ENCODE measurements at regions of chr7 and their contacts with region 1.

Region 1: GRCh38 chr7:135211179-135211945 is at the start of gene WDR91:
- DNase-seq: peak; percentile 92 to 98 (median 97)
- ATAC-seq: peak; percentile 91
- H3K4me3 ChIP-seq: peak within 1 kb of the TSS; percentile 95
- H3K4me3 Mint-ChIP-seq: peak within 1 kb of the TSS; percentile 95
- H3K27ac ChIP-seq: peak within 1 kb of the TSS; percentile 77
- H3K27ac Mint-ChIP-seq: peak within 1 kb of the TSS; percentile 92
- H3K4me1 ChIP-seq: peaks cover 37% of the 10 kb centered on the region
- H3K4me1 Mint-ChIP-seq: peaks cover 42% of the 10 kb centered on the region
- H3K27me3 ChIP-seq: no peaks in the 10 kb centered on the region
- H3K27me3 Mint-ChIP-seq: no peaks in the 10 kb centered on the region
- CTCF ChIP-seq: no peak
- total RNA-seq, gene WDR91: 39.9 to 41.7 TPM

Region 2: GRCh38 chr7:134316539-134317344 is 894.6 kb before region 1 on chr7 and contains the start of gene SLC35B4:
- CTCF ChIA-PET with region 1: no interaction called
- POLR2A ChIA-PET with region 1: no interaction called
- intact Hi-C with region 1: loop called in 1 of 2 experiments (anchors 5 kb)
- DNase-seq: peak; percentile 90 to 97 (median 92)
- ATAC-seq: peak; percentile 96
- H3K4me3 ChIP-seq: peak within 1 kb of the TSS; percentile 98
- H3K4me3 Mint-ChIP-seq: peak within 1 kb of the TSS; percentile 93
- H3K27ac ChIP-seq: peak within 1 kb of the TSS; percentile 36 to 65
- H3K27ac Mint-ChIP-seq: peak within 1 kb of the TSS; percentile 77
- H3K4me1 ChIP-seq: peaks cover 15% of the 10 kb centered on the region
- H3K4me1 Mint-ChIP-seq: peaks cover 26% of the 10 kb centered on the region
- H3K27me3 ChIP-seq: no peaks in the 10 kb centered on the region
- H3K27me3 Mint-ChIP-seq: no peaks in the 10 kb centered on the region
- CTCF ChIP-seq: peak; percentile 27
- total RNA-seq, gene SLC35B4: 5.8 to 7.8 TPM

Region 3: DNA sequence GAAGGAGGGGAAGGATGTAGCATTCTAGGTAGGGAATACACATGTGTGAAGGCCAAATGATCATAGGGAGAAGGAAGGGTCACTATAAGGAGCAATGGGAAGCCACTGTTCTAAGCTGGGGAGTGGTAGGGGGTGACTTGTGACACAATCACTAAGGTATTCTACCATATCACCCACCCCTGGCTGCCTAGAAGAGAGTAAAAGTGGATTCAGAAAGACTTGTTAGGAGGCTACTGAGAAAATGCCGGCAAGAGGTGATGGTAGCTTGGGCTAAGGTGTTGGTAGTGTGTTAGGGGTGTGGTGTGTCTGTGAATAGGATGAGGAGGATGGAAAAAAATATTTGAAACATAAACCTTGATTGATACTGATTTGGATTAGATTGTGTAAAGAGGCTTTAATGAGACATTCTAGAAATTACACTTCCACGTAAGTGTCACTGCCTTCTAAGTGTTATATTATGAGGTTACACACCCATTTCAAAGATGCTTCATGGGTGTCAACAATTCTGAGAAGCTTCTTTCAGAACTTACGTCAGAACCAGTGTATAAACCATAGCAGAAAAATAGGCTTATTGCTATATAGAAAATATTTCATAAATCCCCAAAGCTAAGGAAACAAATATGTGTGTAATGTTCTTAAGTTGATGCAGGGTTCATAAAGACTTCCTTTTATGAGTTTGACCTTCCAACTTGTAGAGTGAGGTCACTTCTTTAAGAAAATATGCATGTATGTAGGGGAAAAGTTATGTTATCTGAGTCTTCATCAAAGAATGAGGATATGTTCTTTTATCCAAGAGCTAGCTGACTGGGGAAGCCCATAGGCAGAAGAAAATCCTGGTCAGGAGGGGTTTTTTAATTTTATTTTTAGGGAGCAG is 570.3 kb before region 1 on chr7:
- CTCF ChIA-PET with region 1: no interaction called
- POLR2A ChIA-PET with region 1: interaction called, 6 read pairs
- intact Hi-C with region 1: loop called (anchors 1 to 2 kb)
- DNase-seq: peak in 1 of 14 experiments; percentile 54
- ATAC-seq: no peak
- H3K4me3 ChIP-seq: no peak overlapping the region
- H3K4me3 Mint-ChIP-seq: no peak overlapping the region
- H3K27ac ChIP-seq: no peak overlapping the region
- H3K27ac Mint-ChIP-seq: peak overlapping the region; percentile 3
- H3K4me1 ChIP-seq: peaks cover 20% of the 10 kb centered on the region
- H3K4me1 Mint-ChIP-seq: peaks cover 32% of the 10 kb centered on the region
- H3K27me3 ChIP-seq: no peaks in the 10 kb centered on the region
- H3K27me3 Mint-ChIP-seq: no peaks in the 10 kb centered on the region
- CTCF ChIP-seq: no peak

Region 4: GRCh38 chr7:135147899-135148721 is 63.3 kb before region 1 on chr7 and contains the start of gene TMEM140:
- CTCF ChIA-PET with region 1: no interaction called
- POLR2A ChIA-PET with region 1: interaction called, 49 read pairs
- intact Hi-C with region 1: no loop called
- DNase-seq: peak; percentile 35 to 91 (median 58)
- ATAC-seq: peak; percentile 79
- H3K4me3 ChIP-seq: peak within 1 kb of the TSS; percentile 69
- H3K4me3 Mint-ChIP-seq: peak within 1 kb of the TSS; percentile 91
- H3K27ac ChIP-seq: peak within 1 kb of the TSS; percentile 87 to 89
- H3K27ac Mint-ChIP-seq: peak within 1 kb of the TSS; percentile 98
- H3K4me1 ChIP-seq: peaks cover 32% of the 10 kb centered on the region
- H3K4me1 Mint-ChIP-seq: peaks cover 81% of the 10 kb centered on the region
- H3K27me3 ChIP-seq: no peaks in the 10 kb centered on the region
- H3K27me3 Mint-ChIP-seq: no peaks in the 10 kb centered on the region
- CTCF ChIP-seq: no peak
- total RNA-seq, gene TMEM140: 27.7 to 32.2 TPM

Region 5: DNA sequence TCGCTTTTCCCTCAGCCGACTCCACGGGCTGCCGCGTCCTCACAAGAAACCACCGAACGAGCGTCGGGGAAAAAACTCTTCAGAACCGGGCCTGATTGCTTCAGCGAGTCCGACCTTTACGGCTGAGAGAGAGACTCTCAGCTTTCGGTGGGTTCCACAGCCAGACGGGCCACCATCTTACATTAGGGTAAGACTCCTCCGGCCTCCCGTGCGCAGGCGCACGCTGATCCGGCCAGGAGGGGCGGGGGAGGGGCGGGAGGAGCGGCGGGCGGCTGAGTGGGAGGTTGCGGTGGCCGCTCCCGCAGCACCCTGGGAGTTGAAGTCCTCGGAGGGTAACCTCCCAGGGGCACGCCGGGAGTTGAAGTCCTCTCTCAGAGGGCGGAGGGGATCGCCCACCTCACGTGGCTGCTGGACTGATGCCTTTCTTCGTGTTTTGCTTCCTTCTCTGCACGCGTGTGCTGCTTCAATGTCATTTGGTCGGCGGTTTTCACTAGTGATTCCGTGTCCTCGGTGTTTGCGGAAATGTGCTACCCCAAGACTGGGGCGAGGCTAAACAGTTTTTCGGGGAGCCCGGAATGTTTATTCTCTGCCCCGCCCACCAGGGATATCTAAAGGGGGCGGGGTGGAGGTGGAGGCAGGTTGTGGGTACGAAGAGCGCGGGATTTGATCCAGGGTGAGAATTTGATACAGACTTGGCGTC is 298.7 kb after region 1 on chr7 and contains the start of gene CNOT4:
- CTCF ChIA-PET with region 1: no interaction called
- POLR2A ChIA-PET with region 1: no interaction called
- intact Hi-C with region 1: loop called in 1 of 2 experiments (anchors 5 kb)
- DNase-seq: peak; percentile 94 to 98 (median 97)
- ATAC-seq: peak; percentile 94
- H3K4me3 ChIP-seq: peak within 1 kb of the TSS; percentile 91
- H3K4me3 Mint-ChIP-seq: no peak within 1 kb of the TSS
- H3K27ac ChIP-seq: peak within 1 kb of the TSS; percentile 90 to 96
- H3K27ac Mint-ChIP-seq: no peak within 1 kb of the TSS
- H3K4me1 ChIP-seq: peaks cover 16% of the 10 kb centered on the region
- H3K4me1 Mint-ChIP-seq: peaks cover 14% of the 10 kb centered on the region
- H3K27me3 ChIP-seq: no peaks in the 10 kb centered on the region
- H3K27me3 Mint-ChIP-seq: no peaks in the 10 kb centered on the region
- CTCF ChIP-seq: no peak
- total RNA-seq, gene CNOT4: 24.0 to 29.8 TPM

Region 6: GRCh38 chr7:135662373-135663114 is 451.2 kb after region 1 on chr7 and contains the start of gene STMP1:
- CTCF ChIA-PET with region 1: no interaction called
- POLR2A ChIA-PET with region 1: no interaction called
- intact Hi-C with region 1: loop called in 1 of 2 experiments (anchors 5 kb)
- DNase-seq: peak; percentile 93 to 98 (median 96)
- ATAC-seq: peak; percentile 97
- H3K4me3 ChIP-seq: peak within 1 kb of the TSS; percentile 89
- H3K4me3 Mint-ChIP-seq: peak within 1 kb of the TSS; percentile 93
- H3K27ac ChIP-seq: peak within 1 kb of the TSS; percentile 47 to 53
- H3K27ac Mint-ChIP-seq: peak within 1 kb of the TSS; percentile 81
- H3K4me1 ChIP-seq: peaks cover 23% of the 10 kb centered on the region
- H3K4me1 Mint-ChIP-seq: peaks cover 48% of the 10 kb centered on the region
- H3K27me3 ChIP-seq: no peaks in the 10 kb centered on the region
- H3K27me3 Mint-ChIP-seq: no peaks in the 10 kb centered on the region
- CTCF ChIP-seq: no peak
- total RNA-seq, gene STMP1: 11.5 to 14.1 TPM